Activated CD8-positive, alpha-beta T cell treated with anti-CD3 and anti-CD28 coated beads for 36 hours (primary cell): ENCODE measurements at regions of chr2 and their contacts with region 1.

Region 1: GRCh38 chr2:181715033-181715630 is 34.8 kb upstream of the NEUROD1 start:
- DNase-seq: peak; percentile 88
- ATAC-seq: peak; percentile 80
- H3K4me3 Mint-ChIP-seq: no peak overlapping the region
- H3K27ac Mint-ChIP-seq: no peak overlapping the region
- H3K4me1 Mint-ChIP-seq: no peaks in the 10 kb centered on the region
- H3K27me3 Mint-ChIP-seq: no peaks in the 10 kb centered on the region
- CTCF ChIP-seq: peak; percentile 66

Region 2: DNA sequence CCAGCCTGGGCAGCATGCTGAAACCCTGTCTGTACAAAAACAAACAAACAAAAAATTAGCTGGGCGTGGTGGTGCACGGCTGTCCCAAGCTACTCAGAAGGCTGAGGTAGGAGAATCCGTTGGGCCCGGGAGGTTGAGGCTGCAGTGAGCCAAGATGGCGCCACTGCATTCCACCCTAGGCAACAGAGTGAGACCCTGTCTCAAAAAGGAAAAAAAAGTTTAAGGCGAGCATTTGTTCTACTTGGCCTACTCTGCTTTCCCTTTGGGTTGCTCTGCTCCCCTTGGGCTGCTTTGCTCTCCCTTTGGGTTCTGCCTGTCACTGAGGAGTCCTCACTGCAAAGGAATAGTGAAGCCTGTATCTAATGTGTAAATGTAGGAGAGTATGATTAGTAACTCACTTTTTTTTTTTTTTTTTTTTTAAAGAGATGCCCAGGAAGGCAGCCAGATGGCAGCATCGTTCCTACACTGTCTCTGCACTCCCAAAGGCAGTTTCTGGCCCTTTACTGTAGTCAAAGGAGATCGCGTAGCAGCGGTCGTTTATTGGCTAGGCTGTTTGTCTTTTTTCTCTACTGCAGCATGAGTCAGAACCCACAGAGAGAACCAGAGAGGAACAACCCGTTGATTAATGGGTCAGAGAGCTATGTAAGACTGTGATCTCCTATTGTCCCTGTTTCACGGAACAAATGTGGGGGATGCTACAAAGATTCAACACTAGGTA is 1589.7 kb before region 1 on chr2:
- CTCF ChIA-PET with region 1: interaction called, 3 read pairs
- POLR2A ChIA-PET with region 1: no interaction called
- intact Hi-C with region 1: loop called (anchors 10 kb)
- DNase-seq: peak; percentile 49
- ATAC-seq: peak; percentile 85
- H3K4me3 Mint-ChIP-seq: no peak overlapping the region
- H3K27ac Mint-ChIP-seq: no peak overlapping the region
- H3K4me1 Mint-ChIP-seq: no peaks in the 10 kb centered on the region
- H3K27me3 Mint-ChIP-seq: peaks cover 20% of the 10 kb centered on the region
- CTCF ChIP-seq: peak; percentile 41

Region 3: DNA sequence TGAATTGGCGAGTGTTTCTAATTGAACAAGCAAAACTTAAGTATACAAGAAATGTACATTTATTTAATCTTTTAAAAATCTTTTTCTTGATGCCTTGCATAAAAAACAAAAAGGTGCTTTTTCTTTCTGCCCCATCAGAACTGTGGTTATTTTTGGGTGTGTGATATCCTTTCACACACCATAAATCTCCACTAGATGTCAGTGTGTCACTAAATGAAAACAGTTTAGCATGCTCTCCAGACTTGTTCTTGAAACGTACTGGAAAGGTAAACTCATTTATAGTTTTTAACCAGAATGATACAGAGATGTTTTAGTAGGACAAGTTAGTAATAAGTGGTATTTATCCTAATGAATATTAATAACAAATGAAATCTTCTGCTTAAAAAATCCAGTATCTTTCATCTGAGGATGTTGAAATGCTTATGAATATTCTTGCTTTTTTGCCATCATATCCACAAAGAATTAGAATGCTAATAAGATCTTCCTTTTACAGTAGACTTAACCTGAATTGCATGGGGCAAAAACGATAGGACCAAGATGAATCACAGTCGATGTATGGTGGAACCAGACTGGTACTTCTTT is 637.9 kb before region 1 on chr2:
- CTCF ChIA-PET with region 1: interaction called, 7 read pairs
- POLR2A ChIA-PET with region 1: no interaction called
- intact Hi-C with region 1: loop called (anchors 1 kb)
- DNase-seq: peak; percentile 30
- ATAC-seq: peak; percentile 92
- H3K4me3 Mint-ChIP-seq: no peak overlapping the region
- H3K27ac Mint-ChIP-seq: no peak overlapping the region
- H3K4me1 Mint-ChIP-seq: peaks cover 7% of the 10 kb centered on the region
- H3K27me3 Mint-ChIP-seq: no peaks in the 10 kb centered on the region
- CTCF ChIP-seq: peak; percentile 86

Region 4: DNA sequence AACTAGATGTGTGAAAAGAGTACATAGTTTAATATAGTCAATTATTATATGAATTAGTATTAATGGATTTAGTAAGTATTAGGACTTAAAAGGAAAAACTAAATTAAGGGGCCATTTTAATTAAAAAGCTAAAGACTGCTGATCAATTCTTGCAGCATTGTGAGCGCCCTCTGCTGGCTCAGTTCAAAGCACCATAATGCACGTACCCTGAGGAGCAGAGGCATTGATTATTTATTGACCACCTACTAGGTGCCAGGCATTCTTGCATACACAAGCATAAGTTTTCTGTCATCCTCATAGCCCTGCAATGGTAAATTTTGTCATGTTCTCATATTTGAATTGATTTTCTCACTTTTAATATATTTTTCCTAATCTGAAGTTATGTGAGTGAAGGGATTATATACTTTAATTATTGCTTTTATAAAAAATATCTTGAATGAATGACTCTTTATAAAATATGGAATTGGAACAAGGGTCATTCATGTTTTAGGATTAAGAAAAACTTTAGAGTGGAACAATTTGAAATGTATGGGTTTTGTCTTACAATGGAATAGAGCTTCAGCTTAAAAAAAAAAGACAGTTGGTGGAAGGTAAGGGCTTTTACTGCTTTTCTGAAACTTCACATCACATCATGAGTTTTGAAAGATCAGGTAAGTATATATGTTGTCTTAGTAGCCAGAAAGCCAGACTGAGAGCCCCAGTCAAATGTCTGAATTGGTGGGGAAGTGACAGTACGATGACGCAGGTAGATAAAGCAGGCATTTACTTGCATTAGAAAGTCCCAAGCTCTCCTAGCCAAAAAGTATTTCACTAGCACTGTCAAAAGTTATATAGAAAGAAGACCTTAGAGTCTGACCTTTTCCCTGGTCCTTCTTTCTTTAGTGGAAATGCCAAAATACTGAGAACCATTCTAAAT is 248.2 kb before region 1 on chr2:
- CTCF ChIA-PET with region 1: interaction called, 16 read pairs
- POLR2A ChIA-PET with region 1: no interaction called
- intact Hi-C with region 1: no loop called
- DNase-seq: peak; percentile 94
- ATAC-seq: peak; percentile 41
- H3K4me3 Mint-ChIP-seq: peak overlapping the region; percentile 26
- H3K27ac Mint-ChIP-seq: peak overlapping the region; percentile 74
- H3K4me1 Mint-ChIP-seq: peaks cover 91% of the 10 kb centered on the region
- H3K27me3 Mint-ChIP-seq: no peaks in the 10 kb centered on the region
- CTCF ChIP-seq: peak; percentile 94

Region 5: GRCh38 chr2:181573140-181573736 is 141.9 kb before region 1 on chr2:
- CTCF ChIA-PET with region 1: interaction called, 79 read pairs
- POLR2A ChIA-PET with region 1: no interaction called
- intact Hi-C with region 1: loop called (anchors 5 kb)
- DNase-seq: no peak
- ATAC-seq: no peak
- H3K4me3 Mint-ChIP-seq: no peak overlapping the region
- H3K27ac Mint-ChIP-seq: no peak overlapping the region
- H3K4me1 Mint-ChIP-seq: no peaks in the 10 kb centered on the region
- H3K27me3 Mint-ChIP-seq: peaks cover 5% of the 10 kb centered on the region
- CTCF ChIP-seq: peak; percentile 41

Region 6: DNA sequence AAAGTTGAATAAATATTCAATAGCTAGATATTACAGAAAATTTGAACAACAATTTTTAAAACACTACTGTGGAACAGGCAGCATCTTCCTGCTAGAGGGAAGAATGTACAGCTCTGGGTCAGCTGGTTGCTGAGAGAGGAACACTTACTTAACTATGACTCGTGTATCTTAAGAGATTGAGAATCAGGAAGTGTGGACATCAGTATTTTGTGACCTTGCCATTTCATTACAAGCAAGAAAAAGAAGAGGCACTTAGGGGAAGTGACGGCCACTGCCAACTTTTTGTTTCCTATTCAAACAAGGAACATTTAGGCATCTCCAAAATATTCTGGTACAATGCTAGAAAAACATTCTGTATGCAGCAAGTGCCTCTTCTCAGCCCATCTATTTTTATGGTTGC is 222.3 kb after region 1 on chr2:
- CTCF ChIA-PET with region 1: no interaction called
- POLR2A ChIA-PET with region 1: no interaction called
- intact Hi-C with region 1: no loop called
- DNase-seq: no peak
- ATAC-seq: no peak
- H3K4me3 Mint-ChIP-seq: no peak overlapping the region
- H3K27ac Mint-ChIP-seq: no peak overlapping the region
- H3K4me1 Mint-ChIP-seq: no peaks in the 10 kb centered on the region
- H3K27me3 Mint-ChIP-seq: peaks cover 3% of the 10 kb centered on the region
- CTCF ChIP-seq: no peak